CD8-positive, alpha-beta T cell (primary cell): ENCODE measurements at regions of chr1 and their contacts with region 1.

Region 1: GRCh38 chr1:55277377-55278130 is 62.4 kb upstream of the USP24 start:
- DNase-seq: peak; percentile 60 to 87 (median 79)
- ATAC-seq: peak; percentile 96
- H3K4me3 ChIP-seq: no peak overlapping the region
- H3K4me3 Mint-ChIP-seq: no peak overlapping the region
- H3K27ac ChIP-seq: no peak overlapping the region
- H3K27ac Mint-ChIP-seq: no peak overlapping the region
- H3K4me1 ChIP-seq: no peaks in the 10 kb centered on the region
- H3K4me1 Mint-ChIP-seq: peaks cover 7% of the 10 kb centered on the region
- H3K27me3 ChIP-seq: no peaks in the 10 kb centered on the region
- H3K27me3 Mint-ChIP-seq: no peaks in the 10 kb centered on the region
- CTCF ChIP-seq: peak; percentile 84

Region 2: DNA sequence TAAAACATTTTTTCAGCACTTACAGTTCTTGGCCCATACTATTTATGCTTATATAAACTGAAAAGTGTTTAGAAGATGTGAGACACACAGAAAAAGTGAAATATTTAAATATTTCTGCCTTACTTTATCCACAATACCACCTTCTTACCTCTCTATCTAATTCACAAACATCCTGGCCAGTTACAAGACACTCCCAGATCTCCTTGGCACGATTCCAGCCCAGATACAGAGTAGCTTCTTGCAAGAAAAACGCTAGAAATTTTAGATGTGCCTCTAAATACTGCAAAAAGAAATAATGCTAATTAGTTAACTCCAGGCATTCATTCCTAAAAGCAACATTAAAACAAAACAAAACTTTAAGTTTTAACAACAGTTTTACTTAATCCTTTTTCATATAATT is 130.8 kb before region 1 on chr1:
- CTCF ChIA-PET with region 1: interaction called, 119 read pairs
- POLR2A ChIA-PET with region 1: interaction called, 3 read pairs
- intact Hi-C with region 1: no loop called
- DNase-seq: peak in 1 of 9 experiments; percentile 15
- ATAC-seq: no peak
- H3K4me3 ChIP-seq: no peak overlapping the region
- H3K4me3 Mint-ChIP-seq: no peak overlapping the region
- H3K27ac ChIP-seq: no peak overlapping the region
- H3K27ac Mint-ChIP-seq: peak overlapping the region; percentile 23
- H3K4me1 ChIP-seq: peaks cover 12% of the 10 kb centered on the region
- H3K4me1 Mint-ChIP-seq: peaks cover 15% of the 10 kb centered on the region
- H3K27me3 ChIP-seq: no peaks in the 10 kb centered on the region
- H3K27me3 Mint-ChIP-seq: no peaks in the 10 kb centered on the region
- CTCF ChIP-seq: no peak

Region 3: GRCh38 chr1:55164906-55165305 is 112.6 kb before region 1 on chr1:
- CTCF ChIA-PET with region 1: interaction called, 12 read pairs
- POLR2A ChIA-PET with region 1: no interaction called
- intact Hi-C with region 1: no loop called
- DNase-seq: no peak
- ATAC-seq: peak; percentile 42
- H3K4me3 ChIP-seq: no peak overlapping the region
- H3K4me3 Mint-ChIP-seq: no peak overlapping the region
- H3K27ac ChIP-seq: no peak overlapping the region
- H3K27ac Mint-ChIP-seq: peak overlapping the region; percentile 23
- H3K4me1 ChIP-seq: no peaks in the 10 kb centered on the region
- H3K4me1 Mint-ChIP-seq: peaks cover 8% of the 10 kb centered on the region
- H3K27me3 ChIP-seq: no peaks in the 10 kb centered on the region
- H3K27me3 Mint-ChIP-seq: no peaks in the 10 kb centered on the region
- CTCF ChIP-seq: no peak

Region 4: DNA sequence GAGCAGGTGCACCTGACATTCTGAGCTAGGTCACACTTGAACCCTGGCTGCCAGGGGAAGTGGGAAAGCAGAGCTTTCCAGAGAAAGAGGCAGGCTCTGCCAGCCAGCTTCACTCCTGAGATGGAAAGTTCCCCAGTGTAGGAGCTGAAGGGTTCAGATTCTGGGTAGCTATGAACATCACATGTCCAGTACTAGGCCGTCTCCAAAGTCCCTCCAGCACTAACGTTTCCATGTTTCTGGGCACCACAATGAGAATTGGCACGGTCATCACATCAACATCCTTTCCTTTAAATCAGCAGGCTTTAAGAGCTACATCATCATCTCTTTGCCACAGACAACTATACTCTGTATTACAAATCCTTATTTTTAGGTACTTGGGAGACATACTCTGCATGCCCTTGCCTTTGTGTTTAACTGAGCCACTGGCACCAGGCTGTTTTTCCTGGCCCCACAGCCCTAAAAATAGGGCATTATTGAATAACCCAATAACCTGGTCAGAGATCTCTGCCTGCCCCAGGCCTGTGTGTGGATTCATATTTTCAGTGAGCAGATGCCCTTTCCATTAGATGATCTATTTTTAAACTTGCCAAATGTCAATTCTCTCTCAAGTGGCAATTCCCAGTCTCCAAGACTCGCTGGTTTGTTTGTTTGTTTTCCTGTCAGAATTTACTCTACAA is 27.0 kb before region 1 on chr1:
- CTCF ChIA-PET with region 1: interaction called, 14 read pairs
- POLR2A ChIA-PET with region 1: no interaction called
- intact Hi-C with region 1: no loop called
- DNase-seq: no peak
- ATAC-seq: no peak
- H3K4me3 ChIP-seq: no peak overlapping the region
- H3K4me3 Mint-ChIP-seq: no peak overlapping the region
- H3K27ac ChIP-seq: no peak overlapping the region
- H3K27ac Mint-ChIP-seq: no peak overlapping the region
- H3K4me1 ChIP-seq: no peaks in the 10 kb centered on the region
- H3K4me1 Mint-ChIP-seq: no peaks in the 10 kb centered on the region
- H3K27me3 ChIP-seq: no peaks in the 10 kb centered on the region
- H3K27me3 Mint-ChIP-seq: no peaks in the 10 kb centered on the region
- CTCF ChIP-seq: no peak